ENCODE measurements at regions of chr1 and their contacts with region 1.

Region 1: GRCh38 chr1:163875200-163875926 is 553.6 kb downstream of the NUF2 start:
- DNase-seq: peak; percentile 74
- H3K4me3 Mint-ChIP-seq: peak overlapping the region; percentile 30
- H3K27ac Mint-ChIP-seq: peak overlapping the region; percentile 53
- H3K4me1 Mint-ChIP-seq: peaks cover 17% of the 10 kb centered on the region
- H3K27me3 Mint-ChIP-seq: no peaks in the 10 kb centered on the region
- CTCF ChIP-seq: no peak

Region 2: GRCh38 chr1:163863731-163864130 is 11.6 kb before region 1 on chr1:
- CTCF ChIA-PET with region 1: interaction called, 12 read pairs
- POLR2A ChIA-PET with region 1: no interaction called
- intact Hi-C with region 1: no loop called
- DNase-seq: no peak
- H3K4me3 Mint-ChIP-seq: no peak overlapping the region
- H3K27ac Mint-ChIP-seq: no peak overlapping the region
- H3K4me1 Mint-ChIP-seq: no peaks in the 10 kb centered on the region
- H3K27me3 Mint-ChIP-seq: no peaks in the 10 kb centered on the region
- CTCF ChIP-seq: no peak